Testis (tissue), 5 donors: ENCODE measurements at regions of chr13 and their contacts with region 1.

Region 1: GRCh38 chr13:79522583-79522982 is 41.6 kb downstream of the NDFIP2 start:
- DNase-seq: no peak
- H3K4me3 ChIP-seq: no peak overlapping the region
- H3K27ac ChIP-seq: no peak overlapping the region
- H3K4me1 ChIP-seq: no peaks in the 10 kb centered on the region
- H3K27me3 ChIP-seq: no peaks in the 10 kb centered on the region
- CTCF ChIP-seq: no peak
- POLR2A ChIP-seq: no peak

Region 2: DNA sequence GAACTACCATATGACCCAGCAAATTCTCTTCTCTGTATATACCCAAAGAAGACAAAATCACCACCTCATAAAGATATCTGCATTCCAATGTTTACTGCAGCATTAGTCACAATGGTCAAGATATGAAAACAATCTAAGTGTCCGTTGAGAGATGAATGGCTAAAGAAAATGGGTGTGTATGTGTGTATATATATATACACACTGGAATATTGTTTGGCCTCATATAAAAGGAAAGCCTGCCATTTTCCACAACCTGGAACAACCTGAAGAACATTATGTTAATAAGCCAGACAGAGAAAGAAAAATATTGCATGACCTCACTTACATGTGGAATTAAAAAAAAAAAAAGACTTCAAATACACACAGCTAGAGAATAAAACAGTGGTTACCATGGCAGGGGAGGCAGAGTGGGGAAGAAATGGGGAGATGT is 87.0 kb before region 1 on chr13:
- intact Hi-C with region 1: loop called (anchors 10 kb)
- DNase-seq: no peak
- H3K4me3 ChIP-seq: no peak overlapping the region
- H3K27ac ChIP-seq: no peak overlapping the region
- H3K4me1 ChIP-seq: no peaks in the 10 kb centered on the region
- H3K27me3 ChIP-seq: no peaks in the 10 kb centered on the region
- CTCF ChIP-seq: no peak
- POLR2A ChIP-seq: no peak